ENCODE measurements at regions of chr3 and their contacts with region 1.

Region 1: GRCh38 chr3:49120438-49121131 is at the start of gene USP19:
- DNase-seq: peak; percentile 56
- H3K4me3 ChIP-seq: peak within 1 kb of the TSS; percentile 94
- H3K27me3 ChIP-seq: no peaks in the 10 kb centered on the region
- CTCF ChIP-seq: no peak
- polyA plus RNA-seq, gene USP19: 32.9 and 54.6 TPM in 2 replicates

Region 2: DNA sequence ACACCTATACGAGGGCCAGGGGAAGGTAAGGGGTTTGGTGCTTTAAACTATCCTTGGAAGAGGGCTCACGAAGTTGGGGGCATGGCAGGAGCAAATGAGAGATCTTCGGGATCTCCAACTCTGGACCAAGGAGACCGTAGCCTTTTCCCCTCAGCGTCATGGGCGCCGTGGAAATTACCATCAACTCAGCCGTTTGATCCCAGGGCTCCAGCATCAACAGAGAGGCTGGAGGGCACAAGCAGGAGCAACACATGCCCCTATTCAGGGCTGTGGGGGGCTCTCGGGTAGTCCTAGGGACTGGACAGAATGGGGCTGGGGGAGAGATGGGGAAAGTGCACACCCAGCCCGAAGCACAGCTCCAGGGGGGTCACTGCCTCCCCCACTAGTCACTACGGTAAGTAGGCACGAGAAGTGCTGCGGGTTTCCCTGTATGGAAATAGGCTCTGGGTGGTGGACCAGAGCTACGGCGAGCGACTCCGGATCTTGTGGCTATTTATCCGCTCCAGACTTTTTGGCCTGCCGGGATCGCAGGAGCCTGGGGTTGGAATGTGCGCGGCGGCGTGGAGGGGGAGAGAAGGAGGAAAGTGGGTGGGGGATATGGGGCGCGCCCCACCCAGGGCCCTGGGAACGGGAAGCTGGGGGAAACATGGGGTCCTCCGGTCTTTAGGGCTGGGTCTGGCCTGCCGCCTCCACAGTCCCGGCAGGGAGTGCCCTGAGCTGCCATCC is 12.8 kb after region 1 on chr3:
- CTCF ChIA-PET with region 1: interaction called, 12 read pairs
- POLR2A ChIA-PET with region 1: interaction called, 9 read pairs
- DNase-seq: peak; percentile 54
- H3K4me3 ChIP-seq: peak overlapping the region; percentile 70
- H3K27me3 ChIP-seq: 0 out of 2 replicates have a peak, but pooled peaks cover 2% of the 10 kb centered on the region
- CTCF ChIP-seq: no peak

Measured in BJ (cell line).